A673 (cell line): ENCODE measurements at regions of chr1 and their contacts with region 1.

Region 1: DNA sequence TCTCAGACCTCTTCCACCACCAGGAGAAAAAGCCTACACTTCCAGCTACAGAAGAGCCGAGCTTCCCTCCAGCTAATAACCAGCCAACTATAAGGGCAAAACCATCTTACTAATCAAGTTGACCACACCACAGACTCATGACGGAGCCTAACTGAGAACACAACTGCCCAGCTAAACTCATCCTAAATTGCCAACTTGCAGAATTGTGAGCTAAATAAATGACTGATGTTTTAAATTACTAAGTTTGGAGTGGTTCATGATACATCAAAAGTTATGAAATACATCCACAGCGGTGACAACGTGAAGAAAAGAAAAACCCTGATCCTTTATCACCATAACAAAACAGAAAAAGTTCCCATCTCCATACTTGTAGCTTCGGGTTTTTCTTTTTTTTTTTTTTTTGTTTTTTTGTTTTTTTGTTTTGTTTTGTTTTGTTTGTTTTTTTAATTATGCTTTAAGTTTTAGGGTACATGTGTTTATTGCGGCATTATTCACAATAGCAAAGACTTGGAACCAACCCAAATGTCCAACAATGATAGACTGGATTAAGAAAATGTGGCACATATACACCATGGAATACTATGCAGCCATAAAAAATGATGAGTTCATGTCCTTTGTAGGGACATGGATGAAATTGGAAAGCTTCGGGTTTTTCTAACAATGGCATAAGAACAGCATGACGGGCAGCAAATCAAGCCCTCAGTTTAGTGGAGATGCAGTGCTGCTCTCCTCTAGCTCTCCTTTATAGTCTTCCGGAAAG is 122.6 kb downstream of the PIGK start:
- DNase-seq: no peak
- H3K4me3 ChIP-seq: no peak overlapping the region
- H3K27ac ChIP-seq: no peak overlapping the region
- H3K4me1 ChIP-seq: no peaks in the 10 kb centered on the region
- H3K27me3 ChIP-seq: no peaks in the 10 kb centered on the region
- CTCF ChIP-seq: no peak

Region 2: DNA sequence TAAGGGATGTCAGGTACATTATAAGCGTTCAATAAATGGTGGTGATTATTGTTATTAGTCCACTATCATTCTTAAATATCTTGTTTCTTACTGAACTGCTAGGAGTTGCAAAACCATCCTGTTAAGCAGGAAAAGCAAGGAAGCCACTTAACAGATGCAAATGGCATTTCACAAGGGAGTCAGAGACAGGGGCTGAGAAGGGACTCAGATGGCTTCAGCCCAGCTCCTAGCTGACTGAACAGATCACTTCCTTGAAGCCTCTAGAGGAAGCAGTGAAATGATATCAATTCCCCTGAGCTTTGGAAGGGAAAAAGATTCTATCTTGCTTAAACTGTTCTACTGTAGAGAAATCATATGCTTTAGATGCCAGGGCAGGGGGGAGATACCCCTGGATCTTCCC is 77.9 kb before region 1 on chr1:
- CTCF ChIA-PET with region 1: no interaction called
- POLR2A ChIA-PET with region 1: interaction called, 14 read pairs
- intact Hi-C with region 1: no loop called
- DNase-seq: peak; percentile 7
- H3K4me3 ChIP-seq: no peak overlapping the region
- H3K27ac ChIP-seq: no peak overlapping the region
- H3K4me1 ChIP-seq: no peaks in the 10 kb centered on the region
- H3K27me3 ChIP-seq: peaks cover 14% of the 10 kb centered on the region
- CTCF ChIP-seq: no peak